Tibial artery (tissue), 4 donors: ENCODE measurements at regions of chr11 and their contacts with region 1.

Region 1: GRCh38 chr11:5696210-5696609 is 6.6 kb downstream of the TRIM22 start:
- DNase-seq: no peak
- H3K4me3 ChIP-seq: no peak overlapping the region
- H3K27ac ChIP-seq: no peak overlapping the region
- H3K4me1 ChIP-seq: peaks cover 0 to 13% (median 2%) of the 10 kb centered on the region in 4 donors
- H3K27me3 ChIP-seq: no peaks in the 10 kb centered on the region
- CTCF ChIP-seq: no peak

Region 2: DNA sequence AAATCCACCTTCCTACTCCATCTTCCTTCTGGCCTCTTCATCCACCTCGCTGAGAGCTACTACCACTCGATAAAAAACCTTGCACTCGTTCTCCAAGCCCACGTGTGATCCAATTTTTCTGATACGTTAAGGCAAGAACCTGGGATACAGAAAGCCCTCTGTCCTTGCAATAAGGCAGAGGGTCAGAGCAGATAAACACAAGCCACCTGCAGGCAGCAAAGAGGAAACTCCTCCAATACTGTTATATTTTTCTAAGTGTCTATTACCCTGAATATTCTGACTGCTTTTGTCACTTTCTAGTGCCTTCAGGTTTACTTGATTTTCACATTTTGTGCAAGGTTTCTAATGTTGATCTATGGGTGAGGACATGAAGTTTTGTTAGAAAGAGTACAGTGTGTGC is 37.9 kb before region 1 on chr11:
- intact Hi-C with region 1: no loop called
- DNase-seq: no peak
- H3K4me3 ChIP-seq: no peak overlapping the region
- H3K27ac ChIP-seq: no peak overlapping the region
- H3K4me1 ChIP-seq: no peaks in the 10 kb centered on the region
- H3K27me3 ChIP-seq: no peaks in the 10 kb centered on the region
- CTCF ChIP-seq: no peak

Region 3: DNA sequence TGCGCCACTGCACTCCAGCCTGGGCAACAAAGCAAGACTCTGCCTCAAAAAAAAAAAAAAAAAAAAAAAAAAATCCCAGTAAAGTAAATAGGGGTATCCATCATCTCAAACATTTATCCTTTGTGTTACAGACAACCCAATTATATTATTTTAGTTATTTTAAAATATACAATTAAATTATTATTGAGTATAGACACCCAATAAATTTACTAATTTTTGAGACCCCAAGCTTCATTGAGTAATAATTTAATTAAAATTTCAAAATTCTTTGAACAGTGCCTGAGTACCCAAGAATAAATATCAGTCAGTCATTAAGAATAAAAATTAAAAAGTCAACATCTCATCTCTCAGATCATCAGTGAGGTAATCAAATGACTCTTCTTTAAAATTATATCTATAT is 57.7 kb after region 1 on chr11 and contains the start of gene OR52N4:
- intact Hi-C with region 1: no loop called
- DNase-seq: no peak
- H3K4me3 ChIP-seq: no peak within 1 kb of the TSS
- H3K27ac ChIP-seq: no peak within 1 kb of the TSS
- H3K4me1 ChIP-seq: no peaks in the 10 kb centered on the region
- H3K27me3 ChIP-seq: no peaks in the 10 kb centered on the region
- CTCF ChIP-seq: no peak

Region 4: DNA sequence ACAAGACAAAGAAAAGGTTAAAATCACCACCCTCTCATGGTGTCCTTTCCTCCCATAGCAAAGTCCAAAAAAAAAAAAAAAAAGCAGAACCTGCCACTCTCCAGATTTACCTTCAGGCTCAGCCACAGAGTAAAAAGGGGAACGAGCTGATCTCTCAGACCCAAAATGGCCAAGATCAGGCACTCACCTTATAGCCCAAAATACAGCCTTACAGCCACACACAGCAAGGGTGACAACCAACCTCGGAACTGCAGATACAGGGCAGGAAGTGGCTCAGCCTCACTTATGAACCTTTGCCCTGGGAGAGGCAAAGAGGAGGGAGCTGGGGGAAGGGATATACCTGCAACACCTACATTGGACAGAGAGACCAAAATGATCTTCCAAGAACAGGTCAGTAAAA is 533.7 kb after region 1 on chr11:
- intact Hi-C with region 1: loop called (anchors 5 kb)
- DNase-seq: no peak
- H3K4me3 ChIP-seq: no peak overlapping the region
- H3K27ac ChIP-seq: no peak overlapping the region
- H3K4me1 ChIP-seq: peaks cover 0 to 23% (median 15%) of the 10 kb centered on the region in 4 donors
- H3K27me3 ChIP-seq: no peaks in the 10 kb centered on the region
- CTCF ChIP-seq: no peak